ENCODE measurements at regions of chr12 and their contacts with region 1.

Region 1: DNA sequence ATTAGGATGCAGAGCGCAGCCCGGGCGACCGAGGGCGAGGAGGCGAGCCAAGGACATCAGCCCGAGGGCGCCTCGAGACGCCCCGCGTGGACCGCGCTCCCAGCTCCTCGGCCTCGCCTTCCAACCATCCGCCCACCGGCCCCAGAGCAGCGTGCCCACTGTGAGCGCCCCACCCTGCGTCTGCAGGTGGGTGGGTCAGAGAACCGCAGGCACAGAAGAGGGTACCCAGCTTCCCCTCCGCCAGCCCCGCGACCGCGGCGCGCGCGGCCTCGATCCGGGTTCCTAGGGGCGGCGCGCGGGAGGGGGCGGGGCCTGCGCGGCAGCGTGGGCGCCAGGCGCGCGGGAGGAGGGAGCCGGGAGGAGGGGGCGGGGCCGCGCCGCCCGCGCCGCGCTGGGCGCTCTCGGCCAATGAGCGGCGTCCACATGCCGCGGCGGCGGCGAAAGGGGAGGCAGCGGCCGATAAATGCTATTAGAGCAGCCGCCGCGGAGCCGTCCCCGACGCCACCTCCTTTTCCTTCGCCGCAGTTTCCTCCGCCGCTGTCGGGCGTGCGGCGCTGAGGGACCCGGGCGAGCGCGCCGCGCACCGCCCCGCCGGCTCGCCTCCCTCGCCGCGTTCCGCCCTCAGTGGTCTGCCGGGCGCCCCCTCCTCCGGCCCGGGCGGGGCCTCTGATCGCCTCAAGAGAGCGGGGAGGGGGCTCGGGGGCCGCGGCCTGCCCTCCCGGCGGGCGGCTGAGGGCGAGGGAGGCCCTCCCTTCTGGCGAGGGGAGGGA is at the start of gene ATP2A2:
- DNase-seq: peak; percentile 87 to 94 (median 90)
- H3K4me3 ChIP-seq: peak within 1 kb of the TSS; percentile 75
- H3K27ac ChIP-seq: peak within 1 kb of the TSS; percentile 82 to 94
- H3K4me1 ChIP-seq: peaks cover 6% of the 10 kb centered on the region
- H3K27me3 ChIP-seq: no peaks in the 10 kb centered on the region
- CTCF ChIP-seq: no peak
- EP300 ChIP-seq: no peak
- POLR2A ChIP-seq: peak; percentile 76
- total RNA-seq, gene ATP2A2: 60.4 to 164 (median 137) TPM

Region 2: DNA sequence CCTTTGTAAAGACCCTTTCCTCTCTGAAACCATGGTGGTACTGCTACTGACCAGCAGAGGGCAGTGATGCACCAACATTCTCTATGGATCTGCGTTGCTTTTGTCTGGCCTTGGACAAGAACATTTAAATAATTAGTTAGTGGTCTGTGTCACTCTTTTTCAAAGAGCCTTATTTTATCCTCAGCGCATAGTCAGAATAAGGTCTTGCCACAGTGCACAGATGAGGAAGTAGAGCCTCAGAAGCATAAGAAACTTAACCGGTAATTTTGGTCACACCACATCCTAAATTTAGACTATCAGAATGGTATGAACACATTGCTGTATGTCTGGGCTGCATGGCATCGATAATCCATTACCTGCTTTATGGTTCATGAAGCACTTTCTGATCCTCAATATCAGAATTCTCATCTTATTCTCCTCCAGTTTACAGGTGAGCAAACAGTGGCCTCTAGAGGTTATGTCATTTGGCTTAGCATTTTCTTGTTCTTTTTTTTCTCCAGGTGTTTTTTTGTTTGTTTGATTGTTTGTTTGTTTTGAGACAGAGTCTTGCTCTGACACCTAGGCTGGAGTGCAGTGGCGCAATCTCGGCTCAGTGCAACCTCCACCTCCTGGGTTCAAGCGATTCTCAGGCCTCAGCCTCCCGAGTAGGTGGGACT is 180.5 kb before region 1 on chr12:
- intact Hi-C with region 1: loop called in 2 of 4 experiments (anchors 5 to 10 kb)
- DNase-seq: peak; percentile 60 to 83 (median 73)
- H3K4me3 ChIP-seq: no peak overlapping the region
- H3K27ac ChIP-seq: no peak overlapping the region
- H3K4me1 ChIP-seq: no peaks in the 10 kb centered on the region
- H3K27me3 ChIP-seq: no peaks in the 10 kb centered on the region
- CTCF ChIP-seq: peak; percentile 84 to 95 (median 90)
- EP300 ChIP-seq: no peak
- POLR2A ChIP-seq: no peak

Region 3: GRCh38 chr12:110124184-110124995 is 156.6 kb before region 1 on chr12 and contains the start of gene IFT81:
- intact Hi-C with region 1: loop called in 2 of 4 experiments (anchors 5 to 10 kb)
- DNase-seq: peak; percentile 96 to 98 (median 98)
- H3K4me3 ChIP-seq: peak within 1 kb of the TSS; percentile 68
- H3K27ac ChIP-seq: peak within 1 kb of the TSS; percentile 30 to 48
- H3K4me1 ChIP-seq: no peaks in the 10 kb centered on the region
- H3K27me3 ChIP-seq: no peaks in the 10 kb centered on the region
- CTCF ChIP-seq: peak in 1 of 3 donors; percentile 11
- EP300 ChIP-seq: no peak
- POLR2A ChIP-seq: peak; percentile 70
- total RNA-seq, gene IFT81: 15.5 to 22.3 (median 18.4) TPM

Region 4: GRCh38 chr12:110149086-110149660 is 131.8 kb before region 1 on chr12:
- intact Hi-C with region 1: no loop called
- DNase-seq: no peak
- H3K4me3 ChIP-seq: no peak overlapping the region
- H3K27ac ChIP-seq: no peak overlapping the region
- H3K4me1 ChIP-seq: no peaks in the 10 kb centered on the region
- H3K27me3 ChIP-seq: no peaks in the 10 kb centered on the region
- CTCF ChIP-seq: no peak
- EP300 ChIP-seq: no peak
- POLR2A ChIP-seq: no peak

Region 5: GRCh38 chr12:110224379-110225304 is 56.3 kb before region 1 on chr12:
- intact Hi-C with region 1: loop called in 2 of 4 experiments (anchors 2 to 5 kb)
- DNase-seq: peak in 1 of 5 donors; percentile 56
- H3K4me3 ChIP-seq: no peak overlapping the region
- H3K27ac ChIP-seq: peak overlapping the region in 1 of 2 donors; percentile 68
- H3K4me1 ChIP-seq: peaks cover 7% of the 10 kb centered on the region
- H3K27me3 ChIP-seq: no peaks in the 10 kb centered on the region
- CTCF ChIP-seq: peak; percentile 48 to 84 (median 76)
- EP300 ChIP-seq: no peak
- POLR2A ChIP-seq: no peak

Region 6: DNA sequence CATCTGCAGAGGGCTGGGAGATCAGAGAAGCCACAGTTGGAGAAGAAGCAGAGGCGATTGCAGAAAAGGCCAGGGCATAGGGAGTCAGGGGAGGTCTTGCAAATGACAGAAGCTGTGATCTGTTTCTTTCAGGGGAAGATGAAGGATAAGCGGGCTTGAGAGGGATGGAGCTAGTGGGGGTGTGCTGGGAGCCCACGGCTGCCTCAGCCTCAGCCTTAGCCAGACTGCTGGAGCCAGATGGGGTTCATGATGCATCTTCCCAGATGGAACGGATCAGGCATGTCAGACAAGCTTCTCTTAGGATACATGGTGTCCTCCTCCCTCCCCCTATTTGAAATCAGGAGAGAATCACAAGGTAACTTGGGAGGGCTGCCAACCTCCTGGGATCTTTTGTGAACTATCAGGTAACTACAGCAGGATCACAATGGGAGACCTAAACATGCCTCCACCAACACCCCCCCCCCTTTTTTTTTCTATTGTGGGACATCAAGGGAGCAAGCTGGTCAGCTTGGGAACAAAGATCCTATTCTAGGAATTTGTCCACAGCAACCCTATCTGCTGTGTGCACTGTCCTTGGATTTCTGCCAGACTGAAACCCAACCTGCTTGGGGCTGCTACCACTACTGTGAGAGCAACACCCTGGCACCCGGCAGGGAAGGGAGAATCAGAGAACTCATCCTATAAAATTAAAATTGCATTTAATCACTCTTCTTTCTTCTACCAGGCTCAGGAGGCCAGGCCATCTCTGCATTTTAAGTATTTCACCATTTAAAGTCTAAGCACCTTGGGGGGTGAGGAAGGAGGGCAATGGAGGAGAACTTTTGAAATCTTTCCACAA is 10.6 kb before region 1 on chr12:
- intact Hi-C with region 1: loop called in 1 of 4 experiments (anchors 1 kb)
- DNase-seq: peak in 4 of 5 donors; percentile 41 to 57 (median 51)
- H3K4me3 ChIP-seq: no peak overlapping the region
- H3K27ac ChIP-seq: no peak overlapping the region
- H3K4me1 ChIP-seq: peaks cover 21% of the 10 kb centered on the region
- H3K27me3 ChIP-seq: no peaks in the 10 kb centered on the region
- CTCF ChIP-seq: no peak
- EP300 ChIP-seq: no peak
- POLR2A ChIP-seq: no peak